ENCODE measurements at regions of chr11 and their contacts with region 1.

Region 1: GRCh38 chr11:113773416-113774173 is at the start of gene ZW10:
- DNase-seq: peak; percentile 86 to 96 (median 91)
- ATAC-seq: peak; percentile 97
- H3K4me3 ChIP-seq: peak within 1 kb of the TSS; percentile 88
- H3K4me3 Mint-ChIP-seq: peak within 1 kb of the TSS; percentile 95
- H3K27ac ChIP-seq: peak within 1 kb of the TSS; percentile 40 to 42
- H3K27ac Mint-ChIP-seq: peak within 1 kb of the TSS; percentile 84
- H3K4me1 ChIP-seq: peaks cover 12% of the 10 kb centered on the region
- H3K4me1 Mint-ChIP-seq: peaks cover 31% of the 10 kb centered on the region
- H3K27me3 ChIP-seq: no peaks in the 10 kb centered on the region
- H3K27me3 Mint-ChIP-seq: no peaks in the 10 kb centered on the region
- CTCF ChIP-seq: peak; percentile 97
- total RNA-seq, gene ZW10: 2.0 to 2.2 TPM

Region 2: DNA sequence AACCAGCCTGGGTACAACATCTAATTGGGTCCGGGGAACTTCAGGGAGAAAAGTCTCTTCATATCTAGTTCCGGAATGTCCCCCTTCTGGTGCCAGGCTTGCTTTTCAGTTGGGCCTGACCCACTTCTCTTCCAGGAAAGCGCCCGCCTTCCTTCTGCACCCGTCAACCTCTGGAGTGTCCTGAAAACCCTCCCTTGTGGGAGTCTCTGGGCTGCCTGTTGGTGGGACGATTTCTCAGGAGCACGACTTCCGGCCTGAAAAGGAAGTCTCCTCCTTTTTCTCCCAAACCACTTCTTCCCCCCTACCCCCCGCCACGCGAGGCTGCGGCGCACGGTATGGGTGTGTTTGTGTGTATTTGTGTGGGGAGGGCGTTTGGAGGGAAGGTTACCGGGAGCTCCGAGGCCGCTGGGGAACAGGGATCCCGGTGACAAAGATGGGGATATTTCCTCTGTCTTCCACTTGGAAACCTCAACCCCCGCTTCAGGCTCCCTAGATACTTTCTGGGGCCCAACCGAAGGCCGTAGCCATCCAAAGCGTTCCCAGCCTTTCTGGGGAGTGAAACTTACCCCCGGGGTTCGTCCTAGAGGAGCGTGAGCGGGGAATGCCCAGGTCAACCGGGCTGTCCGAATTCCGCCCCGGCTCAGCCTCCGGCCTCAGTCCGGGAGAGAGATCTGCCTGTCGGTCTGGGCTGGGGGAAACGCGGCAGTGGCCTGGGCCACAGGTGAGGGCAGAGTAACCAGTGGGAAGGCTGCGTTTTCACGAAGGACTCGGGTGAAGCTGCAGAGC is 1699.4 kb before region 1 on chr11 and contains the start of gene NKAPD1:
- CTCF ChIA-PET with region 1: no interaction called
- POLR2A ChIA-PET with region 1: no interaction called
- intact Hi-C with region 1: loop called in 1 of 2 experiments (anchors 10 kb)
- DNase-seq: peak; percentile 65 to 92 (median 74)
- ATAC-seq: peak; percentile 87
- H3K4me3 ChIP-seq: peak within 1 kb of the TSS; percentile 80
- H3K4me3 Mint-ChIP-seq: peak within 1 kb of the TSS; percentile 97
- H3K27ac ChIP-seq: peak within 1 kb of the TSS; percentile 70 to 73
- H3K27ac Mint-ChIP-seq: peak within 1 kb of the TSS; percentile 78
- H3K4me1 ChIP-seq: peaks cover 13% of the 10 kb centered on the region
- H3K4me1 Mint-ChIP-seq: peaks cover 36% of the 10 kb centered on the region
- H3K27me3 ChIP-seq: no peaks in the 10 kb centered on the region
- H3K27me3 Mint-ChIP-seq: peaks cover 27% of the 10 kb centered on the region
- CTCF ChIP-seq: no peak
- total RNA-seq, gene NKAPD1: 14.8 to 16.0 TPM

Region 3: GRCh38 chr11:112289588-112290492 is 1483.8 kb before region 1 on chr11:
- CTCF ChIA-PET with region 1: no interaction called
- POLR2A ChIA-PET with region 1: no interaction called
- intact Hi-C with region 1: loop called (anchors 10 kb)
- DNase-seq: peak; percentile 73 to 92 (median 84)
- ATAC-seq: peak; percentile 98
- H3K4me3 ChIP-seq: peak overlapping the region; percentile 54
- H3K4me3 Mint-ChIP-seq: peak overlapping the region; percentile 83
- H3K27ac ChIP-seq: peak overlapping the region in 1 of 2 donors; percentile 16
- H3K27ac Mint-ChIP-seq: peak overlapping the region; percentile 31
- H3K4me1 ChIP-seq: peaks cover 17% of the 10 kb centered on the region
- H3K4me1 Mint-ChIP-seq: peaks cover 36% of the 10 kb centered on the region
- H3K27me3 ChIP-seq: no peaks in the 10 kb centered on the region
- H3K27me3 Mint-ChIP-seq: no peaks in the 10 kb centered on the region
- CTCF ChIP-seq: peak; percentile 93

Region 4: GRCh38 chr11:113296447-113297205 is 477.0 kb before region 1 on chr11:
- CTCF ChIA-PET with region 1: no interaction called
- POLR2A ChIA-PET with region 1: no interaction called
- intact Hi-C with region 1: no loop called
- DNase-seq: no peak
- ATAC-seq: no peak
- H3K4me3 ChIP-seq: no peak overlapping the region
- H3K4me3 Mint-ChIP-seq: no peak overlapping the region
- H3K27ac ChIP-seq: no peak overlapping the region
- H3K27ac Mint-ChIP-seq: no peak overlapping the region
- H3K4me1 ChIP-seq: no peaks in the 10 kb centered on the region
- H3K4me1 Mint-ChIP-seq: no peaks in the 10 kb centered on the region
- H3K27me3 ChIP-seq: peaks cover 5% of the 10 kb centered on the region in 2 experiments
- H3K27me3 Mint-ChIP-seq: peaks cover 61% of the 10 kb centered on the region
- CTCF ChIP-seq: no peak

Region 5: DNA sequence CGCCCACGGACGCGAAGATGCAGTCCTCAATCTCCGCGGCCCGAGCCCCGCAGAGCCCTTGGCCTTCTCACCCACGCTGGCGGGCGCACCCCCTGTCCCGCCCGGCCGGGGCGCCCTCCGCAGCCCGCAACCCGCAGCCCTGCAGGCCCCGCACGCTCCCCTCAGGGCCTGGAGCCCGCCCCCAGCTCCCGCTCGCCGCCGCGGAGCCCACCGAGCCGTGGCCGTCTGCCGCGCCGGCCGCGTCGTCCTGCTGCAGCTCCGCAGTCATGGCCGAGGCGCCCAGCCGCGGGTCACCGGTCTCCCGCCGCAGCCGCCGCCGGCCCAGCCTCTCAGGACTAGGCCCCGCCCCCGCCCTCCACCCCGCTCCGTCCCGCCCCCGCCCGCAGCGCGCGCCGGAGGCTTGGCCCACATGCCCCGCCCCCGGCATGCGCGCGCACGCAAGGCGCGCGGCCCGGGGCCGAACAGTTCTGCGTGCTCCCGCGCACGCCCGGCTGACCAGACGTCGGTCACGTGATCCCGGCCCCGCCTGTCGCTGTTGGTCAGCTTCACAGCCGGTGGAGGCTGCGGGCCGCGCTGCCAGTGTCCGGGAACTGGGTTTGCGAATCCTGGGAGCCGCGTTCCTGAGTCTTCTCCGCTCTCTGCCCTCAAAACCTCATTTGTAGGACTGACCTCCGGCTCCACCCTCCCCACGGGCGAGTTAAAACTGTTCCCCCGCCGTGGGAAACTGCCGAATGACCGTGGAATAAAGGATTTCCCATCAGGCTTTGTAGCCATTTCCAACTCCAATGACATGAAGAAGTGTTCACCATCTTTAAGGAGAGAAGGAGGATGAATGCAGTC is 101.9 kb after region 1 on chr11 and contains the start of gene USP28:
- CTCF ChIA-PET with region 1: no interaction called
- POLR2A ChIA-PET with region 1: interaction called, 3 read pairs
- intact Hi-C with region 1: loop called in 1 of 2 experiments (anchors 2 kb)
- DNase-seq: peak; percentile 47 to 92 (median 72)
- ATAC-seq: peak; percentile 84
- H3K4me3 ChIP-seq: peak within 1 kb of the TSS; percentile 89
- H3K4me3 Mint-ChIP-seq: peak within 1 kb of the TSS; percentile 100
- H3K27ac ChIP-seq: peak within 1 kb of the TSS; percentile 65 to 80
- H3K27ac Mint-ChIP-seq: peak within 1 kb of the TSS; percentile 91
- H3K4me1 ChIP-seq: peaks cover 19% of the 10 kb centered on the region
- H3K4me1 Mint-ChIP-seq: peaks cover 54% of the 10 kb centered on the region
- H3K27me3 ChIP-seq: no peaks in the 10 kb centered on the region
- H3K27me3 Mint-ChIP-seq: no peaks in the 10 kb centered on the region
- CTCF ChIP-seq: no peak
- total RNA-seq, gene USP28: 7.9 to 9.4 TPM

Region 6: GRCh38 chr11:114439229-114440120 is 665.9 kb after region 1 on chr11 and contains the start of gene REXO2:
- CTCF ChIA-PET with region 1: no interaction called
- POLR2A ChIA-PET with region 1: no interaction called
- intact Hi-C with region 1: loop called in 1 of 2 experiments (anchors 2 kb)
- DNase-seq: peak; percentile 89 to 98 (median 93)
- ATAC-seq: peak; percentile 99
- H3K4me3 ChIP-seq: peak within 1 kb of the TSS; percentile 100
- H3K4me3 Mint-ChIP-seq: peak within 1 kb of the TSS; percentile 98
- H3K27ac ChIP-seq: peak within 1 kb of the TSS; percentile 35 to 49
- H3K27ac Mint-ChIP-seq: peak within 1 kb of the TSS; percentile 89
- H3K4me1 ChIP-seq: peaks cover 16% of the 10 kb centered on the region
- H3K4me1 Mint-ChIP-seq: peaks cover 36% of the 10 kb centered on the region
- H3K27me3 ChIP-seq: no peaks in the 10 kb centered on the region
- H3K27me3 Mint-ChIP-seq: no peaks in the 10 kb centered on the region
- CTCF ChIP-seq: peak; percentile 16
- total RNA-seq, gene REXO2: 17.3 to 20.6 TPM